ENCODE measurements at regions of chr22 and their contacts with region 1.

Region 1: DNA sequence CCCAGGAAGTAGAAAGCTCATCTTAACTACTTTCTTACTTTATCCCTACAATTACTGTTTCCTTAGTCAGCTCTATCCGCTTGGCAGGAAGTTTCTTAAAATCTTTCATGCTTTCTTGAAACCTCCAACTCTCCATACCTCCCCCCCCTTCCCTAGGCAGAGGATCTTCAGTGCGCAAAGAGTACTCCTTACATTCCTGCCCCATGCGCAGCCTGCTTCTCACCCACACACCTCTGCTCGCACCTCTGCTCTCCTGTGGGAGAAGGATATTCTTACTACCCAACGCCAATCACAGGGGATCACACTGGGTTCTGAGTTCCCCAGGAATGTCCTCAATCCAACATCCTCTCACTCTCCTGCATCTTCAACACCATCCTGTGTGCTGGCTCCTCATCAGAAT is 12.3 kb downstream of the TCF20 start:
- DNase-seq: no peak
- H3K4me3 ChIP-seq: no peak overlapping the region
- H3K27ac ChIP-seq: no peak overlapping the region
- H3K27me3 ChIP-seq: no peaks in the 10 kb centered on the region
- CTCF ChIP-seq: no peak

Region 2: DNA sequence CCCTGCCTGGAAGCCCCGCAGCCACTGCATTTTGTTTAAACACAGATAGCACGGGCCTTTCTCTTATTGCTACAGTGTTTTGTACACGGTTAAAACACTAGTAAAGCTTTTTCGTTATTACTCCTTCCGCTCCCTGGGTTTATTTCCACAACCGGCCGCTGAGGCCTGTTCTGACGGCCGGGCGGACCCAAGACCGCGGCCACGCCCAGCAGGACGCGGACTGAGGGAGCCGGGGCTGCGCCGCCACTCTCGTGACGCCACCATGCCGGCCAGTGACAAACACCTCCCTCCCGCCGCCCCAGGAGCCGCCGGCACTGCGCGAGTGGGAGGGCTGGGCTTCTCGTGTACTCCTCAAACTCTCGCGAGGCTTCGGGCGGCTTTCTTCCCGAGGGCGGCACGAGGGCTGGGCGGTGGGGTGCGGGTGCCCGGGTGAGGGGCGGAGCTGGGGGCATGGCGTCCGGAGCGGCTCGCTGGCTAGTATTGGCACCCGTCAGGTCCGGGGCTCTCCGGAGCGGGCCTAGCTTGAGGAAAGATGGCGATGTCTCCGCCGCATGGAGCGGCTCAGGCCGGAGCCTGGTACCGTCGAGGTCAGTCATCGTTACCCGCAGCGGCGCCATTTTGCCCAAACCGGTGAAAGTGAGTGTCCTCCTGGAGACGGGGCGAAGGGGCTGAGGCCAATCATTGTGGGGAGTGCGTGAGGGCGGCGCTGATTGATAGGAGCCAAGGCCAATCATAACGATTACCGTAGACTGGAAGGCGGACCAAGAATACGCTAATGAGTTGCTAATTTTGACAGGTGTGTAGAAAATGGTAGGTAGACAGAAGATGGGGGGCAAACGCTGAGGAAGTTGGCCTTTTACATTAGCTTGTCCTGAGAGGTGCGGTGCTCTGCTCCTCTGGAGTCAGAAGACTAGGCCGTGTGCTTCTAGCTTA is 178.5 kb before region 1 on chr22 and contains the start of gene SMDT1:
- CTCF ChIA-PET with region 1: no interaction called
- POLR2A ChIA-PET with region 1: interaction called, 11 read pairs
- DNase-seq: peak; percentile 96
- H3K4me3 ChIP-seq: peak within 1 kb of the TSS; percentile 93
- H3K27ac ChIP-seq: peak within 1 kb of the TSS; percentile 93
- H3K27me3 ChIP-seq: no peaks in the 10 kb centered on the region
- CTCF ChIP-seq: no peak
- polyA plus RNA-seq, gene SMDT1: 25.6 and 28.9 TPM in 2 replicates

Region 3: GRCh38 chr22:42160830-42161696 is 97.1 kb before region 1 on chr22:
- CTCF ChIA-PET with region 1: no interaction called
- POLR2A ChIA-PET with region 1: no interaction called
- DNase-seq: no peak
- H3K4me3 ChIP-seq: no peak overlapping the region
- H3K27ac ChIP-seq: no peak overlapping the region
- H3K27me3 ChIP-seq: no peaks in the 10 kb centered on the region
- CTCF ChIP-seq: no peak